B cell (primary cell): ENCODE measurements at regions of chr19 and their contacts with region 1.

Region 1: DNA sequence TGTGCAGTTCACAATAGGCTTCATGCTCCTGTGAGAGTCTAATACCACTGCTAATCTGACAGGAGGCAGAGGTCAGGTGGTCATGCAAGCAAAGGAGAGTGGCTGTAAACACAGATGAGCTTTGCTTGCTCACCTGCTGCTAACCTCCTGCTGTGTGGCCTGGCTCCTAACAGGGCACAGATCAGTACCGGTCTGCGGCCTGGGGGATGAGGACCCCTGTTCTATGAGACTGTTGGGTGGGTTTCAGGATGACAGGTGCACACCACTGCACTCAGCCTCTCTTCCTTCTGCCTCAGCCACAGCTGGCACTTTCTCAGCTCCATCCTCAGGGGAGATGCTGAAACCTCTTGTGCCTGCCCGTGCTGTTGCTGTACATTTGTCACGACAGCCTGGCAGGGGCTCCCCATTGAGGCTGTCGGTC is 9.7 kb downstream of the CLEC4G start:
- DNase-seq: no peak
- ATAC-seq: peak; percentile 38
- H3K4me3 ChIP-seq: no peak overlapping the region
- H3K4me3 Mint-ChIP-seq: no peak overlapping the region
- H3K27ac ChIP-seq: no peak overlapping the region
- H3K27ac Mint-ChIP-seq: peak overlapping the region; percentile 26
- H3K4me1 ChIP-seq: peaks cover 27 to 40% of the 10 kb centered on the region in 2 donors
- H3K4me1 Mint-ChIP-seq: peaks cover 38% of the 10 kb centered on the region
- H3K27me3 ChIP-seq: peaks cover 0 to 3% (median 0%) of the 10 kb centered on the region in 4 experiments
- H3K27me3 Mint-ChIP-seq: peaks cover under 1% of the 10 kb centered on the region
- CTCF ChIP-seq: no peak

Region 2: DNA sequence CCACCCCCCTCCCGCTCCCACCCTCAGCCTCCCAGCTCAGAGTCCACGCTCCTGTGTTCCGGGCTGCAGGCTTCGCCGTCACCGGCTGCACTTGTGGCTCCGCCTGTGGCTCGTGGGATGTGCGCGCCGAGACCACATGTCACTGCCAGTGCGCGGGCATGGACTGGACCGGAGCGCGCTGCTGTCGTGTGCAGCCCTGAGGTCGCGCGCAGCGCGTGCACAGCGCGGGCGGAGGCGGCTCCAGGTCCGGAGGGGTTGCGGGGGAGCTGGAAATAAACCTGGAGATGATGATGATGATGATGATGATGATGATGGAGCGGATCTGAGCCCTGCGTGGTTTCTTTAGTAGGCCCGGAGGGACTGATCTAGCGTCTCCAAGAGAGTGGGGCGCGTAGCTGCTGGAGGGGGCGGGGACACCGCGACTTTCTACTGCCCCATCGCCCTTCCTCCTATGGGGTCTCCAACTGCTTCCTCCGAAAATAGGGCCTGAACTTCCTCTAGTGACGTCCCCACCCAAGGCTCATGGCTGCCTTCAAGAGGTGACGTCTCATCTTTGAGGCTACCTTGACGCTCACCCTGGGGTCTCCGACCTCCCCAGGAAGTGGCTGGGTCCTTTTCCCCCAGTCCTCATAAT is 52.0 kb before region 1 on chr19:
- CTCF ChIA-PET with region 1: no interaction called
- POLR2A ChIA-PET with region 1: no interaction called
- intact Hi-C with region 1: no loop called
- DNase-seq: peak; percentile 28
- ATAC-seq: peak; percentile 10
- H3K4me3 ChIP-seq: peak overlapping the region in 2 of 5 experiments; percentile 21 to 48
- H3K4me3 Mint-ChIP-seq: peak overlapping the region; percentile 72
- H3K27ac ChIP-seq: no peak overlapping the region
- H3K27ac Mint-ChIP-seq: no peak overlapping the region
- H3K4me1 ChIP-seq: peaks cover 8% of the 10 kb centered on the region in 2 donors
- H3K4me1 Mint-ChIP-seq: peaks cover 12% of the 10 kb centered on the region
- H3K27me3 ChIP-seq: peaks cover 0 to 44% (median 9%) of the 10 kb centered on the region in 4 experiments
- H3K27me3 Mint-ChIP-seq: peaks cover 42% of the 10 kb centered on the region
- CTCF ChIP-seq: no peak

Region 3: GRCh38 chr19:7699417-7700401 is 22.5 kb before region 1 on chr19:
- CTCF ChIA-PET with region 1: interaction called, 4 read pairs
- POLR2A ChIA-PET with region 1: interaction called, 14 read pairs
- intact Hi-C with region 1: no loop called
- DNase-seq: peak; percentile 62
- ATAC-seq: peak; percentile 4
- H3K4me3 ChIP-seq: peak overlapping the region in 4 of 5 experiments; percentile 31 to 77 (median 56)
- H3K4me3 Mint-ChIP-seq: peak overlapping the region; percentile 80
- H3K27ac ChIP-seq: peak overlapping the region; percentile 51 to 60
- H3K27ac Mint-ChIP-seq: peak overlapping the region; percentile 93
- H3K4me1 ChIP-seq: peaks cover 88 to 97% of the 10 kb centered on the region in 2 donors
- H3K4me1 Mint-ChIP-seq: peaks cover 79% of the 10 kb centered on the region
- H3K27me3 ChIP-seq: no peaks in the 10 kb centered on the region
- H3K27me3 Mint-ChIP-seq: no peaks in the 10 kb centered on the region
- CTCF ChIP-seq: no peak

Region 4: DNA sequence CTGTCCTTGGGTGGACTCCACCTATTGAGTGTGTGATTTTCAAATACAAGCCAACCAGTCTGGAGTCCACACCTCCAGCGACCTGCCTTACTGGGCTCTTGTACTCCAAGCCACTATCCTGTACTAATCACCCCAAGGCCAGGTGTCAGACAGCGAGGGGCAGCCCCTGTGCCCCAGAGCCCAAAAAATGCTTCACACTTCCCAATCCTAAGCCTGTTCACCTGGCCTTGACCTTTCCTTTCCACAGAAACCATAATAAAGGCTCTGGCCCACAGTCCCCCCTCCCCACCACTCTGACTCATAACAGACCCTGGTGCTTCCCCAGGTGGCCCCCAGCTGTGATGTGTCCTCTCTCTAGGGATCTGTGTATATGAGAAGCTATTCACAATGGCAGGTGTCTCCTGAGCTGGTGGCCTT is 21.2 kb after region 1 on chr19:
- CTCF ChIA-PET with region 1: no interaction called
- POLR2A ChIA-PET with region 1: no interaction called
- intact Hi-C with region 1: loop called (anchors 2 kb)
- DNase-seq: peak; percentile 43
- ATAC-seq: peak; percentile 88
- H3K4me3 ChIP-seq: no peak overlapping the region
- H3K4me3 Mint-ChIP-seq: peak overlapping the region; percentile 30
- H3K27ac ChIP-seq: no peak overlapping the region
- H3K27ac Mint-ChIP-seq: no peak overlapping the region
- H3K4me1 ChIP-seq: peaks cover 28 to 30% of the 10 kb centered on the region in 2 donors
- H3K4me1 Mint-ChIP-seq: peaks cover 52% of the 10 kb centered on the region
- H3K27me3 ChIP-seq: peaks cover 0 to 5% (median 0%) of the 10 kb centered on the region in 4 experiments
- H3K27me3 Mint-ChIP-seq: peaks cover 8% of the 10 kb centered on the region
- CTCF ChIP-seq: no peak